Heart left ventricle (tissue), 16 donors: ENCODE measurements at regions of chr7 and their contacts with region 1.

Region 1: DNA sequence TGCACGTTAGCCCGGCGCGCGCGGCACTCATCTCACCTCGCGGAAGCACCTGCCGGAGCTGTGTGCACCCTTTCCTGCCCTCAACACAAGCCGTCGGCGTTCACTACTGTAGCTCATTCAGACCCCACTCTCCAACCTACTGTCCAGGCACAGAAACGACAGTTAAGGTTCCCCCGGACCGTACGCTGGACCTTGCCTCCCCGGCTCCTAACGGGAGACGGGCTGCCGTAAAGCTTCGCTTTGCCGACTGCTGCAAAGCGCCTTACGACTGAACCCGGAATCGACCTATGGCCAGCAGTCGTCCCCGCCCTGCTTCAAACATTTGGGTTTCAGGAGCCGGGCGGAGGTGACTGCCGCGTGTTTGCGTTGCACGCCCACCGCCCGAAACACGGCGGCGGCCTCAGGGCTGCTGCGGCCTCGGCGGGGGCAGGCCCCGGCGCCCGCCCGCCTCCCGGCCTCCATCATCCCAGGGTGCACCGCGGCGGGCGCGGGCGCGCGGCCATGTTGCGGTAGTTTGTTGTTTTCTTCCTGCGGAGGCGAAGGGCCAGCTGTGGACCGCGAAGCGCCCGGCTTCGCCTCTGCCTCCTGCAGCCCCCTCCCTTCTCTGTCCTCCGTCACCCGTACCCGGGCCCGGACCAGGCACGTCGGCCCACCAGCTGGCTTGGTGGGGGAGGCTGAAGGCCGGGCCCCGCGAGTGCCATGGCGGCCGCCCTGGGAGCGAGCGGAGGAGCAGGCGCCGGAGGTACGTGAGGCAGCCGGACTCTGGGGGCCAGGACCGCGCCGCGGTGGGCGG is at the start of gene RBM33:
- DNase-seq: peak; percentile 75 to 89 (median 83)
- ATAC-seq: peak; percentile 65 to 96 (median 92)
- H3K4me3 ChIP-seq: peak within 1 kb of the TSS; percentile 74 to 100 (median 96)
- H3K27ac ChIP-seq: peak within 1 kb of the TSS; percentile 72 to 98 (median 95)
- H3K4me1 ChIP-seq: peaks cover 0 to 34% (median 21%) of the 10 kb centered on the region in 12 donors
- H3K27me3 ChIP-seq: no peaks in the 10 kb centered on the region
- CTCF ChIP-seq: no peak
- POLR2A ChIP-seq: peak in 1 of 2 donors; percentile 47
- total RNA-seq, gene RBM33: 13.1 to 40.8 (median 35.8) TPM

Region 2: DNA sequence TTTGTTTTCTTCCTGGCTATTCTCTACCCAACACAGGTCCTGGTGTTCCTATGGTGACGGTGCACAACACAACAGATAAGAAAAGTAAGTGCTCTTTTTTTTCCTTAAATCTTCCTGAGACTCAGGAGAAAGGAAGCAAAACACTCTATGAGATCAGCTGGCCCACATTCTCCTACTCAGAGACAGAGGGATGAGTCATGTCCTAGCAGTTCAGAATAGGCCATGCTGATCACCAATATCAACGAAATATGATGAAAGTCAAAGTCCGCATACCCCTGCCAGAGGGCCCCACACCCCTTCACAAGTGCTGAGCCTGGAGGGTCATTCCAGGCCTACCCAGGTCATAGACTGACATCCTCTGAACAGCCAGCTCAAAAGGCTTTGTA is 790.6 kb before region 1 on chr7:
- intact Hi-C with region 1: no loop called
- DNase-seq: no peak
- ATAC-seq: no peak
- H3K4me3 ChIP-seq: no peak overlapping the region
- H3K27ac ChIP-seq: no peak overlapping the region
- H3K4me1 ChIP-seq: no peaks in the 10 kb centered on the region
- H3K27me3 ChIP-seq: peaks cover 0 to 8% (median 0%) of the 10 kb centered on the region in 9 donors
- CTCF ChIP-seq: no peak
- POLR2A ChIP-seq: no peak

Region 3: DNA sequence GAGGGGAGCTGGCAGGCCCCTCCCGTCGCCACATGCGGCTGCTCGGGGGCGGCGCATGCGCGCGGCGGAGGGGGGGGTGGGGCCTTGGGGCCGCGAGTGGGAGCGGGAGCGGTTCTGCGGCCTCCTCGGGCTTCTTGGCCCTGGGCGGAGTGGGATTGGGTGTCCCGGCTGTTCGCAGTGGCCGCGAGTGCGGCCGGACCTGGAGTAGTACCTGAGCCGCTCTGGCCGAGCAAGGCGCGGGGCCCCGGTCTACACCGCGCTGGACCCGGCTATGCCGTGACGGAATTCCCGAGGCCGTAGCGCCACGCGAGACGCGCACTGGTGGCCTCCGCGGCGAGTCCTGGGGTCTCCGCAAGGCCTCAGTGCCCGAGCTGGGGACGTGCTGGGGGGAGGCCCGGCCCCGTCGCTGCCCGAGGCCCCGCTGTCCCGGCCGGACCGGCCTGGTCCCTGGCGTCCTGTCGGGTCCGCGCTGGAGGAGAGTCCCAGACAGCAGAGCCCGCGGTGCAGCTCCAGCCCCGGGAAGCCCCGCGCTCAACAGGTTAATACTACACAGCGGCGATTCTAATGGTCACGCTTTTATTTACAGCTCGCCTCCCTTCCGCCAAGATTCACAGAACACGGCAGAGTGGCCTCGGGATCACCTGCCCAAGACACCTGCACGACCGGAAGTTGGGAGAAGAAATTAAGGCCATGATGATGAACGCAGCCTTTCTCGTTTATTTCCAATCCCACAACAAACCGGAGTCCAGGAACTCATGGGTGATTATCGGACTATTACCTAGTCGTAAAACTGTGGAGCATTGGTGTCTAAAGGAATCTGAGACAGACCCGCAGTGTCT is 640.8 kb before region 1 on chr7:
- intact Hi-C with region 1: loop called in 1 of 10 experiments (anchors 5 kb)
- DNase-seq: peak; percentile 78 to 90 (median 85)
- ATAC-seq: peak; percentile 90 to 98 (median 98)
- H3K4me3 ChIP-seq: peak overlapping the region; percentile 57 to 100 (median 95)
- H3K27ac ChIP-seq: peak overlapping the region; percentile 89 to 96 (median 92)
- H3K4me1 ChIP-seq: peaks cover 0 to 24% (median 15%) of the 10 kb centered on the region in 12 donors
- H3K27me3 ChIP-seq: no peaks in the 10 kb centered on the region
- CTCF ChIP-seq: no peak
- POLR2A ChIP-seq: peak in 1 of 2 donors; percentile 78

Region 4: DNA sequence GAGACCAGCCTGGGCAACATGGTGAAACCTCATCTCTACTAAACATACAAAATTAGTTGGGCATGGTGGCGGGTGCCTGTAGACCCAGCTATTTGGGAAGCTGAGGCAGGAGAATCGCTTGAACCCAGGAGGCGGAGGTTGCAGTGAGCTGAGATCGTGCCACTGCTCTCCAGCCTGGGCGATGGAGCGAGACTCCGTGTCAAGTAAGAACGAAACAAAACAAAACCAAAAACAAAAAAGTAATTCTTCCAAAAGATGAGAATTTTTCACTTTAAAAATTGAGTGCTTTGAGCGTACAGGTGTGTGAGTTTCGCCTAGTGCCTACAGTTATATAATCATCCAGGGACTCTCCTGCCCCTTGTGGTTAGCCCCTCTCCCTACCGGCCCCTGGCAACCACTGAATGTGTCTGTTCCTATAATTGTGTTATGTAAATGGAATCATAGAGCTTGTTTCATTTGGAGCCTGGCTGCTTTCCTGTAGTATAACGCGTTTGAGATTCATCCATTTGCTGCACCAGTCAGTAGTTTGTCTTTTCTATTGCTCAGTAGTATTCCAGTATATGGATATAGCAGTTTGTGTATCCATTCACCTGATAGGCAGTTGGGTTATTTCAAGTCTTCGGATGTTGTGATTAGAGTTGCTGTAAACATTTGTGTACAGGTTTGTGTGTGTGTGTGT is 80.1 kb after region 1 on chr7:
- intact Hi-C with region 1: loop called in 1 of 10 experiments (anchors 10 kb)
- DNase-seq: no peak
- ATAC-seq: no peak
- H3K4me3 ChIP-seq: no peak overlapping the region
- H3K27ac ChIP-seq: no peak overlapping the region
- H3K4me1 ChIP-seq: peaks cover 0 to 37% (median 5%) of the 10 kb centered on the region in 12 donors
- H3K27me3 ChIP-seq: no peaks in the 10 kb centered on the region
- CTCF ChIP-seq: peak in 1 of 12 donors; percentile 8
- POLR2A ChIP-seq: no peak

Region 5: GRCh38 chr7:155738652-155739537 is 94.5 kb after region 1 on chr7:
- intact Hi-C with region 1: loop called in 2 of 10 experiments (anchors 5 to 10 kb)
- DNase-seq: peak; percentile 57 to 81 (median 71)
- ATAC-seq: peak in 3 of 4 donors; percentile 81 to 85 (median 82)
- H3K4me3 ChIP-seq: no peak overlapping the region
- H3K27ac ChIP-seq: no peak overlapping the region
- H3K4me1 ChIP-seq: peaks cover 0 to 8% (median 4%) of the 10 kb centered on the region in 12 donors
- H3K27me3 ChIP-seq: no peaks in the 10 kb centered on the region
- CTCF ChIP-seq: peak; percentile 31 to 75 (median 62)
- POLR2A ChIP-seq: no peak

Region 6: DNA sequence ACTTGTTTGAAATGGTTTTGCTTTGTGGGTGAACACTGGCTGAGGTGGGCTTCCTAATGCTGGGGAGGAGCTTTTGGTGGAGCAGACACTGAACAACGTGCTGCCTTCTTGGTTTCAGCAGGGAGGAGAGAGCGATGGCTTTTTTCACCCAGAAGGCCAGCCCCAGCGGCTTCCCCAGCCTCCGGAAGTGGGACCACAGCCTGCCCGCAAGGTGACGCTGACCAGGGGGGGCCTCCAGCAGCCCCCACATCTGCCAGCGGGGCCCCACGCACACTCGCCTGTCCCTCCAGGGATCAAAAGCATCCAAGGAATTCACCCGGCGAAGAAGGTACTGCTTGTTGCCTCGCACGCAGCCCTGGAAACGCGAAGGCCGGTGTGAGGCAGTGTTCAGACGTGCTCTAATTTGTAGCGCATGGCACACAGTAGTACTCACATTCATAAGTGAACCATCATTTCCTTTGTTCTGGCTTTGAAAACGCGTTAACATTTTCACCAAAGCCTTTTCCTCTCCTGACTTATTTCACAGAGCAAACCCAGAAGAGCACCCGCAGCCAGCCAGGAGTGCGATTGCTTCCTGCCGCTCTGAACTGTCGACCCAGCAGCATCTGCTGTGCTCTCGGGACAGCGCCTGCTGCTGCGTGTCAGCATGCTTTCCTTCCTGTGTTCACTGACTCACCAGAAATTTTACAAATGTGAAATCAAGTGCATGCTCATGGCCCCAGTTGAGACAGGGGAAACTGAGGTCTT is 119.5 kb after region 1 on chr7:
- intact Hi-C with region 1: loop called in 2 of 10 experiments (anchors 5 kb)
- DNase-seq: no peak
- ATAC-seq: peak in 3 of 4 donors; percentile 62 to 76 (median 63)
- H3K4me3 ChIP-seq: peak overlapping the region in 1 of 12 donors; percentile 28
- H3K27ac ChIP-seq: peak overlapping the region in 11 of 12 donors; percentile 3 to 85 (median 48)
- H3K4me1 ChIP-seq: peaks cover 4 to 59% (median 22%) of the 10 kb centered on the region in 12 donors
- H3K27me3 ChIP-seq: no peaks in the 10 kb centered on the region
- CTCF ChIP-seq: no peak
- POLR2A ChIP-seq: no peak

Region 7: GRCh38 chr7:155769701-155770100 is 125.3 kb after region 1 on chr7:
- intact Hi-C with region 1: loop called in 2 of 10 experiments (anchors 5 kb)
- DNase-seq: no peak
- ATAC-seq: peak in 3 of 4 donors; percentile 7 to 61 (median 60)
- H3K4me3 ChIP-seq: no peak overlapping the region
- H3K27ac ChIP-seq: peak overlapping the region in 4 of 12 donors; percentile 18 to 66 (median 40)
- H3K4me1 ChIP-seq: peaks cover 0 to 17% (median under 1%) of the 10 kb centered on the region in 12 donors
- H3K27me3 ChIP-seq: no peaks in the 10 kb centered on the region
- CTCF ChIP-seq: no peak
- POLR2A ChIP-seq: no peak